Cardiac septum (tissue), 1 donor: ENCODE measurements at regions of chr4 and their contacts with region 1.

Region 1: DNA sequence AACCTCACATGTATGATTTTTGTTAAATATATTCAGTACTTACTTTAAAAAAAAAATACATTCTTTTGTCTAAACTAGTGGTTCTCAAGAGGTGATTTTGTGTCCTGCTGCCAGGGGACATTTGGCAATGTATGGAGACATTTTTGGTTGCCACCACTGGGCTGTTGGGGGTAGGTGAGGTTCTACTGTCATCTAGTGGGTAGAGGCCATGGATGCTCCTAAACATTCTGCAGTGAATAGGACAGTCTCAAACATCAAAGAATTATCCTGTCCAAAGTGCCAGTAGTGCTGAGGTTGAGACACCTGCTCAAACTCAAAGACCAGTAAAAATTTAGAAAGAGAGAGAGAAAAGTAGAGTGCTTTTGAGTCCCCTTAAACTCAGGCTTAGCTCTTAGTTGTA is 32.9 kb upstream of the PGM2 start:
- DNase-seq: no peak

Region 2: DNA sequence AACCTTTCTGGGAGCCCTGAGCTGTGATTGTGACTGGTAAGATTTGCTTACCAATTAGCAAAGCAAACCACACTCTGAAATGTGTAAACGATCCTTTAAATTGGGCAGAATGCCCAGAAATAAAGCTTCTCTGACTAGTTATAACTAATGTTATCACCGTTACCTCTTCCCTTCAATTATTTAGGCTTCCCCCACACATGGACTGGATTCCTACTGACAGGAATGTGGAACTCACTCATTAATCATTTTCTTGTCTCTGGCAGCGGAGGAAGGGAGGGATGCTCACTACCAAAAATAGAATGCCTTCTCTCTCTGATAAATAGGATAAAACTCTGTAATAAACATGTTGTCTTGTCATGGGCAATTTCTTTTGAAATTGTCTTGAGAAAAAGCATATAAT is 574.3 kb before region 1 on chr4:
- intact Hi-C with region 1: no loop called
- DNase-seq: no peak

Region 3: DNA sequence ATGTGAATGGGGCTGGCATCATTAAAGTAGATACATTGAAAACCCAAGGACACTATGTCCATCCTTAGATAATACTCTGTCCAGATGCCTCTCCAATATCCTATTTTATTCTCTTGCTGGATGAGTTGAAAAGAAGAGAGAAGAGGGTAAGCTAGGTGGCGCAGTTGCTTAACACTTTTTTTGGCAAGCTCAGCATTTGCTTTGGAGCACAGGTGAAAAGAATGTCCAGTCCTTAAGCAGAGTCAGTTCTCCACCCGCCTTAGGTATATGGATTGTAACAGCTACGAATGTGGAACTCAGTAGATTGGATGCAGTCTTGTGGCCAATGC is 340.6 kb before region 1 on chr4:
- intact Hi-C with region 1: loop called (anchors 5 kb)
- DNase-seq: no peak

Region 4: DNA sequence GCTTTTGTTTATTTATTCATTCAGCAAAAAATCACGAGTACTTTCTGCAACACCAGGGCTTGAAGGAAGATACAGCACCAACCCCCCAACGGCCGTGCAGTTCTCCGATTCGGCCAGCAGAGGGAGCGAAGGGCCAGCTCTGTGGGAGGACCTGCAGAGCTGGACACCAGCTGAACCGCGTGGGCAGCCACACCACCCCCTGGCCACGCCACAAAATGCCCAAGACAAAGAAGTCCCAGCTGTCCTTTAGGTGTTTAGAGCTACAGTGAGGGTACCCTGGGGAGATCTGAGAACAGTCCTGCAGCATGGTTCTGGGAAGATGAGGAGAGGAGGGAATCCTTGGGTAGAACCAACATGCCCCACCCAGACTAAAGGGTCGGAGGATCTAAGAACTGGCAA is 190.5 kb before region 1 on chr4:
- intact Hi-C with region 1: loop called (anchors 2 kb)
- DNase-seq: peak; percentile 93